Activated CD4-positive, alpha-beta memory T cell treated with anti-CD3 and anti-CD28 coated beads, Interleukin-2, amount 10 ng/mL, durations not matched to agents 7 days and 5 days (primary cell): ENCODE measurements at regions of chr11 and their contacts with region 1.

Region 1: DNA sequence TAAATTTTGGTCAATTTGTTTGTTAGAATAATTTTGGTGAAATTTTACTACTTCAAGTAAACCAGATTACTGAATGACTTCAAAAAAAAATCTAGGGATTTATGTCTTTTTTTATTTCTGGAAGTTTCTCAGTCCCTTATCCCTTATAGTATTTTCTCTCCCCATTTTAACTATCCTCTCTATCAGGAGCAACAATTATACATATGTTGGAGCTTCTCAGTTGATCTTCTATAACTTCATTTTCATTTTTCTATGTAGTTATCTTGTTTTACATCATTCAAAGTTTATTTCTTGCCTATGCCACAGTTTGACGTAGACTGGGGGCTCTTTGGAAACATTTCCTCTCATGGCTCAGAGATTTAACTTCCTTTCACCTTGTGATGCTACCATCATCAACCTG is 34.2 kb downstream of the NNMT start:
- DNase-seq: no peak
- H3K4me3 Mint-ChIP-seq: no peak overlapping the region
- H3K27ac Mint-ChIP-seq: no peak overlapping the region
- H3K4me1 Mint-ChIP-seq: no peaks in the 10 kb centered on the region
- H3K27me3 Mint-ChIP-seq: peaks cover 25% of the 10 kb centered on the region

Region 2: DNA sequence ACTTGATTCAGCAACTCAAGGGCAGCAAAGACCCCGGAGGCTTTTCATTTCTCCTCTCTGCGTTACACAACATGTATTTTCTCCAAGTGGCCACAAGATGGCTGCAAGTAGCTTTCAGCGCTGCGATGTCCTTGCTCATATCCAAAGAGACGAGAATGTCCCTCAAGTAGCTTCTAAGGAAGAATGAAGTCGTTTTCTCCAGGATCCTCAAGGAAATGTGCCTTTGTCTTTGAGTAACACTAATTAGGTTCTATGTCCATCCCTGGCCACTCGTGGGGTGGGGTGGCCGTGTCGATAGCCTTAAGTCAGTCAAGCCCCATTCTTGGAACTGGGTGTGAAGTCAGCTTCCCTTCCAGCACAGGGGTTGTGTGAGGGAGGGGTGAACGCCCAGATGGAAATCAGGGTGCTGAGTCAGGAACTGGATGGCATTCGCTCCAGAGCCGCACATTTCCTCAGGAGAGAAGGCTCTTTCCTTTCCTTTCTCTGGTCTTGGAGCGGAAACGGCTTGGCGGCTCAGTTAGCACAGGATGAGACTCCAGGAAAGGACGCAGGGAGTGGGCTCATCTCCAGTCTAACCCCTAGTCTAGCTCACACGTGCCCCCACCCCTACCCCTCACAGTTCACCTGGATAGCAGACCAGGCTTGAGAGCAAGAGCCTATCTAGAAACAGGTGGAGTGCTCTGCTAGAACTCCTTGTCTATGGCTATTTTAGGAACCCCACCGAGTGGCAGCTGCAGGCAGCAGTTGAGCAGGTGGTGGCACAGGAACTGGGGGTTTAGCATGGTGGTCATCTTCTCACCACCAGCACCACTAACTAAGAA is 10.1 kb after region 1 on chr11:
- CTCF ChIA-PET with region 1: interaction called, 10 read pairs
- POLR2A ChIA-PET with region 1: no interaction called
- DNase-seq: peak; percentile 32
- H3K4me3 Mint-ChIP-seq: no peak overlapping the region
- H3K27ac Mint-ChIP-seq: no peak overlapping the region
- H3K4me1 Mint-ChIP-seq: peaks cover 4% of the 10 kb centered on the region
- H3K27me3 Mint-ChIP-seq: peaks cover 17% of the 10 kb centered on the region